Heart left ventricle (tissue), 16 donors: ENCODE measurements at regions of chr18 and their contacts with region 1.

Region 1: DNA sequence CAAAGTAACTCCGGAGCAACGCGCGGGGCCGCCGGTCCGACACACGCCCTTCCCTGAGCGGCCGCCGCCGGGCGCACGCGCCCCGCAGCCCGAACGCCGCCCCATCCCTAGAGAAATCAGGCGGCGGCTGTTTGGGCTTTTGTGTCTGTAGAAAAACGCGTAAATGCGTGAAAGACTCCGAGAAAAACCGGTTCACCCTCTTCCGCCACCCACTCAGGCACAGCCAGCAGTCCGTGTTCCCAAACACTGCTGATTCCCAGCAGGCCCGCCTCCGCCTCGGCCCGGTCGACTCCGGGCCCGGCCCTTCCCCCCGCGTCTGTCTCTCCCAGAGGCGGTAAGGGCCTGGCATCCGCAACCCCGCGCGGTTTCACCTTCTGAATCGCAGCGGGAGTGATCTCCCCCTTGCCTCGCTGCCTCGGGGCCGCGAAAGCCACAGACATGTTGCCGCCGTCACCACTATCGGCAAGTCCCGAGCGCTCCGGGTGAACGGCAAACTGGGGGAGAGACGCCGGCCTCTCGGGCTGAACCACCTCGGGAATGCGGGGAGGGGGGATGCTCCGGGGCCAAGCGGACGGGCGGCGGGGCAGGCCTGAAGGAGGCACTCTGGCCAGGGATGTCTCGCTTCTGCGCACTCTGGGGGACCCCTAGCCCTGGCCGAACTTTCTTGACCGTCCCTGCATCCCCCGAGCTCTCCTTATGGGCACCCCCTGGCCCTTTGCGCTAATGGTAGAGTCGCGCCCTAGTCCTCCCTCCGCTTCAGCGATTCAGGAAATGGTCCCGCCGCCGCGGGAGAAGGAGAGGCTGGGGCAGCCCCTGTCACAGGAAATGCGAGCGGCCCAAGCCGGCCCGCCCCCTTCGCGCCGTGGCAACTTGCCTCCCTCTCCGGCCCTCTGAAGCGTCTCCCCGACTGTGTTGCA is at the start of gene SS18:
- DNase-seq: peak; percentile 95 to 96 (median 96)
- ATAC-seq: peak; percentile 97 to 98 (median 98)
- H3K4me3 ChIP-seq: peak within 1 kb of the TSS; percentile 63 to 99 (median 86)
- H3K27ac ChIP-seq: peak within 1 kb of the TSS; percentile 90 to 100 (median 98)
- H3K4me1 ChIP-seq: peaks cover 2 to 41% (median 20%) of the 10 kb centered on the region in 12 donors
- H3K27me3 ChIP-seq: no peaks in the 10 kb centered on the region
- CTCF ChIP-seq: peak in 2 of 12 donors; percentile 8 to 24
- POLR2A ChIP-seq: peak in 1 of 2 donors; percentile 45
- total RNA-seq, gene SS18: 27.3 to 60.5 (median 39.7) TPM

Region 2: DNA sequence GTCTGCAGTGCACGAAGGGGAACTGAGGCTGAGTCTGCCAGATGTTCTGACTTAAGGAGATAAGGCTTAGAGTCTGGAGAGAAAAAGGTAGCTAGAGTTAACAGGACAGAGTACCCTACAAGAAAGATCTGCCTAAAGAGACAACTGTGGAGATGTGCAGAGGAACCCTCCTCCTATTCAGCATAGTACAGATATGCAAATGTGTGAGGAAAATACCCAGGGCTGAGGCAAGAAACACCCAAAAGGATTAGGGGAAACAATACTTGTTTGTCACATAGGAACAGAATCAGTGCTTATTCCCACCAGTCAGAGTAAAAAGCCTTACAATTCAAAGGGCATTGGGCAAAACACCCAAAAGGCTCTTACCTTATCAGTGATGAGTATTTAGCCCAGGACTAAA is 67.8 kb before region 1 on chr18:
- intact Hi-C with region 1: loop called in 1 of 10 experiments (anchors 5 kb)
- DNase-seq: no peak
- ATAC-seq: no peak
- H3K4me3 ChIP-seq: no peak overlapping the region
- H3K27ac ChIP-seq: no peak overlapping the region
- H3K4me1 ChIP-seq: no peaks in the 10 kb centered on the region
- H3K27me3 ChIP-seq: no peaks in the 10 kb centered on the region
- CTCF ChIP-seq: no peak
- POLR2A ChIP-seq: no peak

Region 3: GRCh38 chr18:26034850-26035497 is 55.4 kb before region 1 on chr18:
- intact Hi-C with region 1: loop called in 1 of 10 experiments (anchors 10 kb)
- DNase-seq: no peak
- ATAC-seq: no peak
- H3K4me3 ChIP-seq: no peak overlapping the region
- H3K27ac ChIP-seq: no peak overlapping the region
- H3K4me1 ChIP-seq: peaks cover 0 to 2% (median 0%) of the 10 kb centered on the region in 12 donors
- H3K27me3 ChIP-seq: no peaks in the 10 kb centered on the region
- CTCF ChIP-seq: no peak
- POLR2A ChIP-seq: no peak

Region 4: DNA sequence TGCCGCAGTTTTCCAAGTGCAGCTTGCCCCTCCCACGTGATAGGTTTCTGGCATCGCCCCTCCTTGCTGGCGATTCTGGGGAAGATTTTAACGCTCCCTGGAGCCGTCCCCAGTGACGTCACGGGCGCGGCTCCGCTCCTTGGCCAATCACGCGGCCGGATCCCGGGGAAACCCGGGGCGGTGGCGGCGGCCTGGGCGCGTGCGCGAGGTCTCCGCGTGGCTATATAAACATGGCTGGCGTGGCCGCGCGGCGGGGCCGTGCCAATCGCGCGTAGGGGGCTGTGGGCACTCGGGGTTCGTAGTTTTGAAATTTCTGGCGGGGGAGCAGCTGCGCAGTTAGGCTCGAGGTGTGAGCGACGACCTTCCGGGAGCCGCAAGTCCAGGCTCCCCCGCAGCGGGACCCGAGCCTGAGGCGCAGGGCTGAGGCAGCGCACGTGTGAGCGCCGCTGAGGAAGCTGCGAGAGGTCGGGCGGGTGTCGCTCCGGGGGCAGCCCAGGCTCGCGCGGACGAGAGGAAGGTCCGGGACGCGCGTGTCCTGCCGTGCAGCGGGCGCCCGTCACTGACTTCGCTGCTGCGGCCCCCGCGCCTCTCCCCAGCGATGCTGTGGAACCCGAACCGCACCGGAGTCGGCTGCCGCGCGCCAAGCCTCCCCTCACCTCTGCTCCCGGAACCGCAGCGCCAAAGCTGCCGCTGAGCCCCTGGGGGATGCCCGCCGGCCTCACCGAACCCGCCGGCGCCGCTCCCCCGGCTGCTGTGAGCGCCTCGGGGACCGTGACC is 136.0 kb after region 1 on chr18 and contains the start of gene TAF4B:
- intact Hi-C with region 1: loop called in 6 of 10 experiments (anchors 1 to 10 kb)
- DNase-seq: peak; percentile 93 to 97 (median 94)
- ATAC-seq: peak; percentile 95 to 99 (median 99)
- H3K4me3 ChIP-seq: peak within 1 kb of the TSS; percentile 38 to 94 (median 78)
- H3K27ac ChIP-seq: peak within 1 kb of the TSS in 11 of 12 donors; percentile 2 to 77 (median 64)
- H3K4me1 ChIP-seq: peaks cover 0 to 20% (median 8%) of the 10 kb centered on the region in 12 donors
- H3K27me3 ChIP-seq: no peaks in the 10 kb centered on the region
- CTCF ChIP-seq: no peak
- POLR2A ChIP-seq: no peak
- total RNA-seq, gene TAF4B: 0.76 to 3.6 (median 1.7) TPM